ENCODE measurements at regions of chr16 and their contacts with region 1.

Region 1: GRCh38 chr16:89484923-89485679 is 5.3 kb downstream of the ANKRD11 start:
- DNase-seq: peak in 3 of 9 donors; percentile 28 to 42 (median 33)
- ATAC-seq: no peak
- H3K4me3 ChIP-seq: peak overlapping the region; percentile 19
- H3K4me3 Mint-ChIP-seq: peak overlapping the region; percentile 78 to 98 (median 88)
- H3K27ac ChIP-seq: peak overlapping the region; percentile 70
- H3K27ac Mint-ChIP-seq: peak overlapping the region; percentile 83 to 99 (median 96)
- H3K4me1 ChIP-seq: peaks cover 79 to 86% of the 10 kb centered on the region in 2 donors
- H3K4me1 Mint-ChIP-seq: peaks cover 80 to 91% (median 83%) of the 10 kb centered on the region in 7 donors
- H3K27me3 ChIP-seq: no peaks in the 10 kb centered on the region
- H3K27me3 Mint-ChIP-seq: peaks cover 0 to 2% (median 0%) of the 10 kb centered on the region in 5 donors

Region 2: GRCh38 chr16:89363621-89364393 is 121.3 kb before region 1 on chr16:
- CTCF ChIA-PET with region 1: no interaction called
- POLR2A ChIA-PET with region 1: interaction called, 6 read pairs
- intact Hi-C with region 1: loop called (anchors 1 kb)
- DNase-seq: peak in 2 of 9 donors; percentile 12 to 59
- ATAC-seq: no peak
- H3K4me3 ChIP-seq: no peak overlapping the region
- H3K4me3 Mint-ChIP-seq: peak overlapping the region; percentile 10 to 73 (median 62)
- H3K27ac ChIP-seq: peak overlapping the region; percentile 23
- H3K27ac Mint-ChIP-seq: peak overlapping the region; percentile 13 to 90 (median 77)
- H3K4me1 ChIP-seq: peaks cover 56 to 75% of the 10 kb centered on the region in 2 donors
- H3K4me1 Mint-ChIP-seq: peaks cover 65 to 99% (median 87%) of the 10 kb centered on the region in 7 donors
- H3K27me3 ChIP-seq: no peaks in the 10 kb centered on the region
- H3K27me3 Mint-ChIP-seq: no peaks in the 10 kb centered on the region

Region 3: DNA sequence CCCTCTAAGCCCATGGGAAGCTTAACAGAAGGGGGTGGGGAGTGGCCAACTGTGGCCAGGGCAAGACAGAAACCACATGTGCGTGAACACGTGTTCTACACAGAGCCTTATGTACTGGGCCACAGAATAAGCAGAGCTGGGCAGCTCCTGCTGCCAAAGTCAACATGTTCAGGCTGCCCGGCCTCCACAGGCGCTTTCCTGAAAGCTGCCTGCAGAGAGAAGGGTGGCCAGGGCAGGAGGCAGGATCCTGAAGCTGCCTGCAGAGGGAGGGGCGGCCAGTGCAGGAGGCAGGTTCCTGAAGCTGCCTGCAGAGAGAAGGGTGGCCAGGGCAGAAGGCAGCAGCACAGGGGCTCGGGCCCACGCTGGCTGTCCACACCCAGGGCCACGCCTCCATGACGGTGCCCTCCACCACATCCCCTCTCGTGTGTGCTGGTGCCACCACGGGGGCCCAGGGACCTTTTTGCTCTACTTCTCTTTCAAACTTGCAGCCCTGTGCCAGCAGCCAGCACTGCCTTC is 74.2 kb before region 1 on chr16:
- CTCF ChIA-PET with region 1: interaction called, 3 read pairs
- POLR2A ChIA-PET with region 1: interaction called, 17 read pairs
- intact Hi-C with region 1: loop called (anchors 2 kb)
- DNase-seq: peak in 3 of 9 donors; percentile 17 to 34 (median 26)
- ATAC-seq: peak; percentile 28
- H3K4me3 ChIP-seq: no peak overlapping the region
- H3K4me3 Mint-ChIP-seq: peak overlapping the region; percentile 6 to 86 (median 76)
- H3K27ac ChIP-seq: peak overlapping the region; percentile 72
- H3K27ac Mint-ChIP-seq: peak overlapping the region; percentile 89 to 96 (median 93)
- H3K4me1 ChIP-seq: peaks cover 70 to 84% of the 10 kb centered on the region in 2 donors
- H3K4me1 Mint-ChIP-seq: peaks cover 71 to 92% (median 78%) of the 10 kb centered on the region in 7 donors
- H3K27me3 ChIP-seq: no peaks in the 10 kb centered on the region
- H3K27me3 Mint-ChIP-seq: no peaks in the 10 kb centered on the region

Region 4: GRCh38 chr16:89436366-89436765 is 48.7 kb before region 1 on chr16:
- CTCF ChIA-PET with region 1: interaction called, 4 read pairs
- POLR2A ChIA-PET with region 1: interaction called, 10 read pairs
- intact Hi-C with region 1: loop called (anchors 1 to 5 kb)
- DNase-seq: no peak
- ATAC-seq: no peak
- H3K4me3 ChIP-seq: peak overlapping the region; percentile 36
- H3K4me3 Mint-ChIP-seq: peak overlapping the region in 7 of 10 donors; percentile 24 to 93 (median 83)
- H3K27ac ChIP-seq: peak overlapping the region; percentile 43
- H3K27ac Mint-ChIP-seq: peak overlapping the region in 7 of 9 donors; percentile 82 to 95 (median 93)
- H3K4me1 ChIP-seq: peaks cover 74 to 96% of the 10 kb centered on the region in 2 donors
- H3K4me1 Mint-ChIP-seq: peaks cover 0 to 67% (median 28%) of the 10 kb centered on the region in 7 donors
- H3K27me3 ChIP-seq: no peaks in the 10 kb centered on the region
- H3K27me3 Mint-ChIP-seq: no peaks in the 10 kb centered on the region

Region 5: DNA sequence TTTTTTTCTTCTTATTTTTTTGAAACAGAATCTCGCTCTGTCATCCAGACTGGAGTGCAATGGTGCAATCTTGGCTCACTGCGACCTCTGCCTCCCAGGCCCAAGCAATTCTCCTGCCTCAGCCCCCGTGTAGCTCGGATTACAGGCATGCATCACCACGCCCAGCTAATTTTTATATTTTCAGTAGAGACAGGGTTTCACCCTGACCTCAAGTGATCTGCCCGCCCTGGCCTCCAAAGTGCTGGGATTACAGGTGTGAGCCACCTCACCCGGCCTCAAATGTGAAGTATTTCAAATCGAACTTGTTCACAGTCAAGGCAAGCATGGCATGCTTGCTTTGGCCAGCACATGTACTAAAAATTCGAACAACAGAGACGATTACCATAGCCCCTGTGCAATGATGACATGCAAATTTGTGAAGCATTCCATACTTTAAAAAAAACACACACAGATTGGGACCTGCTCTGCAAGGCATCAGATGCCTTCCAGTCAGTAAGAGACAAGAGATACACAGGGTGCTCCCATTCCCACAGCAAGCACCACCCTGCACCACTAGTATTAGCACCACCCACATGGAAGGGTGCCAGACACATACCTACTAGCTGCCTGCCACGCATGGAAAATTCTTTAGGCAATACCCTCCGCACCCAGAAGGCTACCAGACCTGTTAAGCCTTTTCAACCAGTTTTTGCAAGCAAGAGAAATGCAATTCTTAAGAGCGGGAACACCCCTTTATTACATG is 41.9 kb before region 1 on chr16:
- CTCF ChIA-PET with region 1: interaction called, 4 read pairs
- POLR2A ChIA-PET with region 1: interaction called, 4 read pairs
- intact Hi-C with region 1: loop called (anchors 1 to 5 kb)
- DNase-seq: peak in 2 of 9 donors; percentile 34 to 45
- ATAC-seq: no peak
- H3K4me3 ChIP-seq: no peak overlapping the region
- H3K4me3 Mint-ChIP-seq: peak overlapping the region; percentile 60 to 82 (median 78)
- H3K27ac ChIP-seq: peak overlapping the region; percentile 58
- H3K27ac Mint-ChIP-seq: peak overlapping the region; percentile 71 to 96 (median 81)
- H3K4me1 ChIP-seq: peaks cover 78 to 89% of the 10 kb centered on the region in 2 donors
- H3K4me1 Mint-ChIP-seq: peaks cover 0 to 93% (median 73%) of the 10 kb centered on the region in 7 donors
- H3K27me3 ChIP-seq: no peaks in the 10 kb centered on the region
- H3K27me3 Mint-ChIP-seq: no peaks in the 10 kb centered on the region

Region 6: DNA sequence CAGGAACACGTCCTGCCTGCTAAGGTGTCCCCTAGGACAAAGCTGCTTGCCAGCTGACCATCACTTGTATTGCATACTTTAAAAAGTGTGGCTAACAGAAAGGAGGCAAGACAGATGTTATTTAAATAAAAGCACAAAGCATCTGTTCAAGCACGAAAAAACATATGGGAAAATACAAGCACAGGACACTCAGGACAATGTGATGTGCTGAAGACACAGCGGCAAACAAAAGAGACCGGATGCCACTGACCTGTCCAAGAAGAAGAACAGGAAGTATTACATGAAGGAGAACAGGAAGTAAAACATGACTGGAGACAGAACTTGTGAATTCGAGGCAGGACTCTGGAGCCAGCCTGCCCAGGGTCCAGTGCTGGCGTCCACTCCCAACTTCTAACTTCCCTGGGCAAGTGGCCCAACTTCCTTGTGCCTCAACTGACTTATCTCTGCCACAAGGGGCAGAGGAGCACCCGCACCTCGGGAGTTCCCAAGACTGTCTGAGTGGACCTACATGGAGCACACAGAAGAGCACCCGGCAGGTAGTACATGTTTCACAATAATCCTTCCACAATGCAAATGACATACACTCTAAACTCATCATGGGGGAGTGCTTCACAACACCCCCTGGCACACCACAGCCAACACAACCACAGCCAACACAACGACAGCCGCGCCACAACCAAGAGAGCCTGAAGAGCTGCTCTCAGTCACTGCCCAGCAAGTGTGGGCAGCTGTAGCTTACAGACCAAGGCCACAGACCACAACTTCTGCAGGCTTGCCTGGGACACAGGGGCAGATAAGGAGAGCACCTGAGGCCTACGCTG is 31.4 kb before region 1 on chr16:
- CTCF ChIA-PET with region 1: no interaction called
- POLR2A ChIA-PET with region 1: interaction called, 3 read pairs
- intact Hi-C with region 1: loop called in 1 of 2 experiments (anchors 2 kb)
- DNase-seq: no peak
- ATAC-seq: peak; percentile 55
- H3K4me3 ChIP-seq: peak overlapping the region; percentile 36
- H3K4me3 Mint-ChIP-seq: peak overlapping the region; percentile 40 to 76 (median 69)
- H3K27ac ChIP-seq: peak overlapping the region; percentile 6
- H3K27ac Mint-ChIP-seq: peak overlapping the region; percentile 13 to 86 (median 72)
- H3K4me1 ChIP-seq: peaks cover 68% of the 10 kb centered on the region in 2 donors
- H3K4me1 Mint-ChIP-seq: peaks cover 34 to 84% (median 72%) of the 10 kb centered on the region in 7 donors
- H3K27me3 ChIP-seq: no peaks in the 10 kb centered on the region
- H3K27me3 Mint-ChIP-seq: no peaks in the 10 kb centered on the region

Region 7: GRCh38 chr16:89466920-89467319 is 18.2 kb before region 1 on chr16:
- CTCF ChIA-PET with region 1: interaction called, 3 read pairs
- POLR2A ChIA-PET with region 1: interaction called, 17 read pairs
- intact Hi-C with region 1: loop called (anchors 1 to 2 kb)
- DNase-seq: no peak
- ATAC-seq: no peak
- H3K4me3 ChIP-seq: no peak overlapping the region
- H3K4me3 Mint-ChIP-seq: peak overlapping the region in 8 of 10 donors; percentile 17 to 64 (median 46)
- H3K27ac ChIP-seq: no peak overlapping the region
- H3K27ac Mint-ChIP-seq: peak overlapping the region; percentile 4 to 91 (median 46)
- H3K4me1 ChIP-seq: peaks cover 30 to 40% of the 10 kb centered on the region in 2 donors
- H3K4me1 Mint-ChIP-seq: peaks cover 36 to 87% (median 69%) of the 10 kb centered on the region in 7 donors
- H3K27me3 ChIP-seq: no peaks in the 10 kb centered on the region
- H3K27me3 Mint-ChIP-seq: no peaks in the 10 kb centered on the region

Measured in naive thymus-derived CD4-positive, alpha-beta T cell (primary cell).